Activated CD4-positive, alpha-beta memory T cell treated with anti-CD3 and anti-CD28 coated beads for 36 hours (primary cell): ENCODE measurements at regions of chr10 and their contacts with region 1.

Region 1: GRCh38 chr10:84059523-84059922 is 79.8 kb upstream of the GHITM start:
- DNase-seq: no peak
- H3K4me3 Mint-ChIP-seq: no peak overlapping the region
- H3K27ac Mint-ChIP-seq: no peak overlapping the region
- H3K4me1 Mint-ChIP-seq: no peaks in the 10 kb centered on the region
- H3K27me3 Mint-ChIP-seq: peaks cover 8% of the 10 kb centered on the region

Region 2: DNA sequence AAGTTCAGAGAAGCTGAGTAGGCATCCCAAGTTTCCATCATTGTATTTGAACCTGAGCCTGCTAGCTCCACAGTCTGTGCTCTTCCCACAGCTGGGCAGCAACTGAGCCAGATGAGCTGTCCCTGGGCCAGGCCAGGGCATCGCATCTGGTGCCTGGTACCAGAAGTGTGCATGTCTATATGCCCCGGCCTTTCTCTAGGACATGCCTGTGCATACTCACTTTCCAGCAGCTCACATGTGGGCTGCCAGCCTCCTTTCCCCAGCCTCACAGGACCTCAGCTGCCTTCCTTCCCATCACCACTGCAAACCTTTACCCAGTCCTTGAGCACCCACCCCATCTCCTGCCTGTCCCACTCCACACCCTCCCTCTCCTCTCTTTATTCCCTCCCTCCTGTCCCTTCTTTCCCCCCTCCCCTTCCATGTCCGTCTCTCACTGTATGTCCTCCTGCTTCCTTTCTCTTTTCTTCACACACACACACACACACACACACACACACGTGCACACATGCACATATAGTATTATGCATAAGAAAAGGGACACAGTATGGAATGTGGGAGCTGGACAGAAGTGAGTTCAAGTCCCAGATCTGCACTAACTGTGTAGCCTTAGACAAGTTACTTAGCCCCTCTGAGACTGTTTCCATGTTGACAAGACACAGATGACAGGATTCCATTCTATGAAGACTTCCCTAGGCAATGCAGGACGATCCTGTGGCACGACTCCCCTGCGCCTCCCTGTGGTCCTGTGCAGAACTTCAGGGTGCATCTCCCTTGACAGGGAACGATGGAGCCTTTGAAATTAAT is 145.7 kb after region 1 on chr10:
- CTCF ChIA-PET with region 1: interaction called, 3 read pairs
- POLR2A ChIA-PET with region 1: no interaction called
- intact Hi-C with region 1: loop called (anchors 1 kb)
- DNase-seq: peak; percentile 82
- H3K4me3 Mint-ChIP-seq: no peak overlapping the region
- H3K27ac Mint-ChIP-seq: no peak overlapping the region
- H3K4me1 Mint-ChIP-seq: no peaks in the 10 kb centered on the region
- H3K27me3 Mint-ChIP-seq: peaks cover 2% of the 10 kb centered on the region